Psoas muscle (tissue), 8 donors: ENCODE measurements at regions of chr9 and their contacts with region 1.

Region 1: GRCh38 chr9:71984403-71984802 is 73.0 kb downstream of the C9orf85 start:
- DNase-seq: peak; percentile 68 to 92
- ATAC-seq: peak; percentile 97 to 100 (median 99)
- H3K4me3 ChIP-seq: no peak overlapping the region
- H3K27ac ChIP-seq: peak overlapping the region; percentile 59
- H3K4me1 ChIP-seq: peaks cover 27% of the 10 kb centered on the region
- H3K27me3 ChIP-seq: no peaks in the 10 kb centered on the region
- CTCF ChIP-seq: no peak

Region 2: DNA sequence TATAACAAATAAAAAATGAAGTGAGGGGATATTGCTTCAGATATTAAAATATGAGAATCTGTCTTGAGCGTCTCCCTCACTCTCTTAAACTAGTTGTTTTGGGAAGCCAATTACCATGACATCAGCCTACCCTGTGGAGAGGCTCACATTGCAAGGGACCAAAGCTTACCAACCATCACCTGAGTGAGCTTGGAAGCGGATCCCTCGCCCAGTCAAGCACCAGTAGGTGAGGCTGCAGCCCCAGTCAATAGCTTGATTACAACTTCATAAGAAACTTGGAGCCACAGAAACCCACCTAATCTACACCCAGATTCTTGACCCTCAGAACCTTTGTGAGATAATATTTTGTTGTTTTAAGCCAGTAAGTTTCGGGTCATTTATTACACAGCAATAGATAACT is 422.3 kb before region 1 on chr9:
- intact Hi-C with region 1: no loop called
- DNase-seq: no peak
- ATAC-seq: no peak
- H3K4me3 ChIP-seq: no peak overlapping the region
- H3K27ac ChIP-seq: no peak overlapping the region
- H3K4me1 ChIP-seq: no peaks in the 10 kb centered on the region
- H3K27me3 ChIP-seq: no peaks in the 10 kb centered on the region
- CTCF ChIP-seq: no peak

Region 3: GRCh38 chr9:71911253-71912074 is 72.9 kb before region 1 on chr9 and contains the start of gene C9orf85:
- intact Hi-C with region 1: loop called in 1 of 2 experiments (anchors 5 kb)
- DNase-seq: peak; percentile 99
- ATAC-seq: peak; percentile 96 to 99 (median 98)
- H3K4me3 ChIP-seq: peak within 1 kb of the TSS; percentile 98
- H3K27ac ChIP-seq: peak within 1 kb of the TSS; percentile 96
- H3K4me1 ChIP-seq: peaks cover 41% of the 10 kb centered on the region
- H3K27me3 ChIP-seq: no peaks in the 10 kb centered on the region
- CTCF ChIP-seq: no peak
- total RNA-seq, gene C9orf85: 5.5 to 9.3 (median 7.7) TPM

Region 4: GRCh38 chr9:72173081-72173480 is 188.7 kb after region 1 on chr9:
- intact Hi-C with region 1: no loop called
- DNase-seq: no peak
- ATAC-seq: no peak
- H3K4me3 ChIP-seq: no peak overlapping the region
- H3K27ac ChIP-seq: no peak overlapping the region
- H3K4me1 ChIP-seq: peaks cover 11% of the 10 kb centered on the region
- H3K27me3 ChIP-seq: no peaks in the 10 kb centered on the region
- CTCF ChIP-seq: no peak